Heart left ventricle (tissue), 16 donors: ENCODE measurements at regions of chr11 and their contacts with region 1.

Region 1: DNA sequence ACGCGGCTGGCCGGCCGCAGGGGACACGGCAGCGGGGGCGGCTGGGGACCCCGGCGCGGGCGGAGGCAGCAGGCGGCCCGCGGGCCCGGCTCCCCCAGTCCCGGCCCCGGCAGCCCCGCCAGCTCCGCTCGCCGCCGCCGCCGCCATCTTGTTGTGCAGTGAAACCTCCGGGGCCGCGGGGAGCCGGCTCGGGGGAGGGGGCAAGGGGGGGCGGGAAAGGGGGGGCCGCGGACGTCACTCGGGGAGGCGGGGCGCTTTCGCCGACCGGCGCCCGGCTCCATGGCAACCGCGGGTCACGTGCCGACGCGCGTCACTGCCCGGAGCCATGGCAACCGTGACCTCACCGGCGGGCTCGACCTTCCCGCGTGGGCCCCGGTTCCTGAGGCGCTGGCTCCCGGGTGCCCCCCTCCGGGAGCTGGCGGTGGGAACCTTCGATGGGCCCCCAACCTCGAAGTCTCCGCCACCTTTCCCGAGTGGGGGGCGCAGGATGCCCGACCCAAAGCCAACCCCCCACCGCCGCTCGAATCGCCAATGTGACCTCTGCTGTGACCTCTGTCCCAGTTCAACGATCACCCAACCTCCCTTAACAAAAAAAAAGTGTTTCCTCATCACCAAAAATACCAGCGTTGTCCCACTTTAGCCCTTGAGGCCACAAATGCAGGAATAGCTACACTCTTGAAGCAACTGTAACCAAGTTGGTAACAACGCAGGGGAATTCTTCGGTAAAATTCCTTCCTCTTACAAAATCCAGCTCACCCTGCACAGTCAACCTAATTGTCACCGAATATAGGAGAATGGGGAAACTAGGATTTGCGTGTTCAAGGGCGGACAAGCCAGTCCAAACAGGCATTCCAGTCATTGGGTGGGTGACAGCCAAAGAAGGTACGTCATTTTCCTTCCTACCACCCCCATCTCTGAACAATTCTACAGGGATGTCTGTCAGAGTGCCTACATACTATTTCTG is at the start of gene SIK3:
- DNase-seq: peak; percentile 95 to 98 (median 97)
- ATAC-seq: peak; percentile 86 to 94 (median 92)
- H3K4me3 ChIP-seq: peak within 1 kb of the TSS; percentile 57 to 94 (median 84)
- H3K27ac ChIP-seq: peak within 1 kb of the TSS; percentile 95 to 99 (median 98)
- H3K4me1 ChIP-seq: peaks cover 0 to 53% (median 44%) of the 10 kb centered on the region in 12 donors
- H3K27me3 ChIP-seq: no peaks in the 10 kb centered on the region
- CTCF ChIP-seq: peak in 11 of 12 donors; percentile 24 to 74 (median 53)
- POLR2A ChIP-seq: peak in 1 of 2 donors; percentile 82
- total RNA-seq, gene SIK3: 25.7 to 67.4 (median 39.0) TPM

Region 2: GRCh38 chr11:116871248-116871647 is 227.3 kb before region 1 on chr11:
- intact Hi-C with region 1: loop called in 1 of 10 experiments (anchors 5 kb)
- DNase-seq: peak in 3 of 5 donors; percentile 38 to 40 (median 38)
- ATAC-seq: peak in 3 of 4 donors; percentile 26 to 64 (median 50)
- H3K4me3 ChIP-seq: no peak overlapping the region
- H3K27ac ChIP-seq: peak overlapping the region in 10 of 12 donors; percentile 19 to 73 (median 54)
- H3K4me1 ChIP-seq: peaks cover 0 to 80% (median 32%) of the 10 kb centered on the region in 12 donors
- H3K27me3 ChIP-seq: no peaks in the 10 kb centered on the region
- CTCF ChIP-seq: no peak
- POLR2A ChIP-seq: no peak

Region 3: DNA sequence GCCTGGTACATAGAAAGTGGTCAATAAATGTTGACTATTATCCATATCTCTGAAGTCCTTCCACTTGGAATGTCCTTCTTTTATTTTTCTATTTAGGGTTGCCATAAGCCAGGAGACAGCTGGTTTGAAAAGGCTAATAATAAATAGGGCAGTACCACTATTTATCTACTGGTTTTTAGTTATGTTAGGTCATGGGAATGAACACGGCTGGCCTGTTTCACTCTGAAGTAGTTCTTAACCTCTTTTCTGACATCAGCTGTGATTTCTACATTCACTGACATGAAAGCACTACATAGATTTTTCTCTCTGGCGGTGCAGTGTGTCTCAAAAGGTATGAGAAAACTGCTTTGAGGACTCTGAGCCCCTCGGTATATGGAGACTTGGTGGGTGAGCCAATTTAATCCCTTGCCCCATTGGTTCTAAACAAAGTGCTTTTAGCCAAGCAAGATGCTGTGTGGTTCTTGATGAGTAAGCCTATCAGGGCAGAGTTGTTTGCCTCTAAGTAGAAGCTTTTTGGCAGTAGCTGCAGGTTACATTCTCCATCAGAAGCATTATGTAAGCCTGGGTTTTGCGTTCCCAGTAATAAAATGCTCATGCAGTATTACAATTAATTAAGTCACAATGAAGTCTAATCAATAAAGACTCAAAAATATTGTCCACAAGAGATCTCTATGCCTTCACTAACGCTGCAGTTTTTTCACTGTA is 212.4 kb before region 1 on chr11:
- intact Hi-C with region 1: loop called in 4 of 10 experiments (anchors 2 to 5 kb)
- DNase-seq: no peak
- ATAC-seq: peak; percentile 69 to 85 (median 81)
- H3K4me3 ChIP-seq: no peak overlapping the region
- H3K27ac ChIP-seq: peak overlapping the region in 9 of 12 donors; percentile 15 to 77 (median 56)
- H3K4me1 ChIP-seq: peaks cover 0 to 36% (median 12%) of the 10 kb centered on the region in 12 donors
- H3K27me3 ChIP-seq: no peaks in the 10 kb centered on the region
- CTCF ChIP-seq: no peak
- POLR2A ChIP-seq: no peak

Region 4: DNA sequence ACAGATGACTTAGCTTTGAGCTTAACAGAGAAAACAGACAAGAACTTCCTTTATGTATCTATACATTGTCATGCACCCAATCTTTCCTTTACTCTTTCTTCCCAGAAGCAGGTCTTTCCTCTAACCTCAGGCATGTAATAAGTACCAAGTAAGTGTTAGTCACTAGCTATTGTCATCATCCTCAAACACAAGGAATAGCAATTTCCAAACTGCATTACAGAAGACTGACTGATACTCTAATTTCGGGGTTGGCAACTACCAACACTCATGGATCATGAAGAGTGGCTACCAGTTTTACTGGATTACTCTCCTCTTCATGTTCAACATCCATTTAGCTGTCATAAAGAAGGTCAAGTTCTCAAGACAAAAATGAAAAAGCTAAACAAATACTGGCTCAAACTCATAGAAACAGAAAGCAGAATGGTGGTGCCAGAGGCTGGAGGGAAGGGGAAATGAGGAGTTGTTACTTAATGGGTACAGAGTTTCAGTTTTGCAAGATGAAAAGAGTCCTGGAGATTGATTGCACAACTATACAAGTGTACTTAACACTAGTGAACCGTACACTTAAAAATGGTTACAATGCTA is 111.9 kb before region 1 on chr11:
- intact Hi-C with region 1: loop called in 1 of 10 experiments (anchors 10 kb)
- DNase-seq: no peak
- ATAC-seq: peak in 3 of 4 donors; percentile 19 to 73 (median 41)
- H3K4me3 ChIP-seq: peak overlapping the region in 1 of 12 donors; percentile 21
- H3K27ac ChIP-seq: peak overlapping the region in 7 of 12 donors; percentile 2 to 86 (median 13)
- H3K4me1 ChIP-seq: peaks cover 0 to 84% (median 45%) of the 10 kb centered on the region in 12 donors
- H3K27me3 ChIP-seq: no peaks in the 10 kb centered on the region
- CTCF ChIP-seq: no peak
- POLR2A ChIP-seq: no peak

Region 5: DNA sequence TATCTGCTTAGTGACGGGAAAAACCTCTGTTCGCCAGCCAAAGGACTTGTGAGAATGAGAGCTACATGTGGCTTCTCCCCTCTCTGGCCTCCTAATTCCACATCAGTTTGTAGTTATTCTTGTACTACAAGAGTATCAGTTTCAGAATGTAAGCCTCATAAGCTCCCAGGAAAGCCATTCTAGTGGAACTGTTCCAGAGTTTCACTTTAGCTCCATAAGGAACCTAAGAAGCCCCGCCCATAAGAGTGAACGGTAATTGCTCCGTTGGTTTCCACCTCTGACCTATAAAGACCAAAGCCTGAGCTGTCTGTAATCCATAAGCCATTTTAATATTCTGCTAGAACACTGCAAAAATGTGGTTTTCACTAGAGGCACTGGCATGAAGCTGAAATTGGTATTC is 53.4 kb before region 1 on chr11:
- intact Hi-C with region 1: loop called in 1 of 10 experiments (anchors 10 kb)
- DNase-seq: no peak
- ATAC-seq: peak in 3 of 4 donors; percentile 44 to 58 (median 58)
- H3K4me3 ChIP-seq: no peak overlapping the region
- H3K27ac ChIP-seq: peak overlapping the region in 7 of 12 donors; percentile 4 to 48 (median 36)
- H3K4me1 ChIP-seq: peaks cover 3 to 52% (median 30%) of the 10 kb centered on the region in 12 donors
- H3K27me3 ChIP-seq: no peaks in the 10 kb centered on the region
- CTCF ChIP-seq: no peak
- POLR2A ChIP-seq: no peak

Region 6: DNA sequence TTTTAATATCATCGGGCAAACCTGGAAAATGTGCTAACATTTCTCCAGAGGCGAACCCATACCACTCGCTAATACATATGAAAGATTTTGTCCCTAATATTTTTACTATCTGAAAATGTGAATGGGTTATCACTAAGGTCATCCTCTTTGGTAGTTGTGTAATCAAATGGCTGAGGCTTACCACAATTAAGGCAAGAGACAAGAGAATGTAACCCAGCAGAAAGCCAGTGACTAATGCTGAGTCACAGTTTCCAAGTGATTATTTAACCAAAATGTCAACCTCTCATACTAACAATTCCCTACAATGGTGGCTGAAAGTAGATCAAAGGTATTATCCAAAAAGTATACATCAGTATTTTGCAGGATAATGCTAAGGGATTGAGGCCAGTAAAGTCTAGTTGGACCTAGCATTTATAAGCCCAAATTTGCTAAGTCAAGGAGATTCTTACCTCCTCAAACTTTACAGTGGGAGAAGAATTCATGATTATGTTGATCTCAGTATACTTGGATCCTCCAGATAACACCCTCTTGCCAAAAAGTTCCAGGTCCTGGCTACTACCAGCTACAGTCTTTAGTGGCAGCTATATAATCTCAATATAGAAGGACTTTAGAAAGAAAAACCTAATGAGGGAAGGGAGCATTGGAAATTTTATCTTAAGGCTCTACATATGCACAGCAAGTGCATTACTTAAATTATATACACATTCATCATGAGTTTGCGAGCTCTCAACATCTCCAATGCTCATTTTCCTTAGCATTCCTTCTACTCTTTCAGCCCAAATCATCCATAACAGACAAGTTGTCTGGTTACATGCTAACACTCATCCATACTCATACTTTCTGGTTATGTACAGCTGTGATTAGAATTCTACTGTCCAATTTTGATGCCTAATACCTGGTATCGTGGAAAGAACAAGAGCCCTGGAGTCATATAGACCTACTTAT is 25.8 kb before region 1 on chr11:
- intact Hi-C with region 1: no loop called
- DNase-seq: no peak
- ATAC-seq: peak in 3 of 4 donors; percentile 45 to 74 (median 61)
- H3K4me3 ChIP-seq: no peak overlapping the region
- H3K27ac ChIP-seq: peak overlapping the region in 4 of 12 donors; percentile 15 to 63 (median 39)
- H3K4me1 ChIP-seq: peaks cover 0 to 79% (median 54%) of the 10 kb centered on the region in 12 donors
- H3K27me3 ChIP-seq: no peaks in the 10 kb centered on the region
- CTCF ChIP-seq: no peak
- POLR2A ChIP-seq: no peak

Region 7: GRCh38 chr11:117083011-117083935 is 15.3 kb before region 1 on chr11:
- intact Hi-C with region 1: no loop called
- DNase-seq: no peak
- ATAC-seq: no peak
- H3K4me3 ChIP-seq: no peak overlapping the region
- H3K27ac ChIP-seq: peak overlapping the region in 2 of 12 donors; percentile 9 to 46
- H3K4me1 ChIP-seq: peaks cover 0 to 50% (median 12%) of the 10 kb centered on the region in 12 donors
- H3K27me3 ChIP-seq: no peaks in the 10 kb centered on the region
- CTCF ChIP-seq: no peak
- POLR2A ChIP-seq: no peak